Posterior vena cava (tissue), 2 donors: ENCODE measurements at regions of chr17 and their contacts with region 1.

Region 1: DNA sequence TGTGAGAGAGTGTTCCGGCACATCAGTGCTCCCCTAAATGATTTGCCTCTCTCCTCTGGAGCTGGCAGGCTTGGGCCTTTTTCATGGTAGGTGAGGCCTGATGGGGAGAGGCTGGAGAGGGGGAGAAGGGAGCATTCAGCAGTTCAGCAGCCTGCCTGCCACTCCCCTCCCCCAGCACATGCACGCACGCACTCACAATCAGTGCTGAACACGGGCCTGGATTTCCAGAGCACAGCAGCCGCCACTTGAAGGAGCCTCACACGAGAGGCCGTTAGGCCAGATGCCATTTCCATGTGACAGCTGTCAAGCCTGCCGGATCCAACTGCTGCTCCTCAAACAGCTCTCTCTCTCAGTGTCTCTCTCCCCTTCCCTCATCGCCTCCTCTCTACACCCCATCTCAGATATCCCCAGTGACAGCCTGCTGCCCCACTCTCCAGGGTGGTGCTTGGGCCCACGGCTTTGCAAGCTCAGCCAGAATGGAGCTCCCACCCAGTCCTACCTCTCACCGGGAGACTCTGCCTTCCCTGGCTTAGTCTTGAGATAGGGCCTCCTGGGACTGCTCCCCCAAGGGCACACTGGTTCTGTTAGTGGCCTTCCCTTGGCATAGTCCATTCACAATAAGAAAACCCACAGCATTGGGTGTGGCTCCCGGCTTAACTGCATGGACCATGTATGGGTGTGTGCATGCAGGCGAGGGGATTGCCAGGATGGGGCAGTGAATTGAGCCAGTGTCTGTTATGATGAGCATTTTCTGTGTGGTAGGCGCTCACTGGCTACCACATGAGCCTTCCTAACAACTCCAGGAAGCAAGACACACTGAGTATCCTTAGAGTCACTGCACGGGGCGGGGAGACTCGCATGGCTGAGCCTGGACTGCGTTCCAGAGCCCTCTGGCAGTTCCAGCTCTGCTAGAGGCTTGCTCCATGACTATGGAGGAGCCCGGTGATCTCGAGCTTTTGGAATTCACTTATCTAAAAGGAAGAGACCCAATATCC is 226.2 kb downstream of the CCDC182 start:
- DNase-seq: peak; percentile 52

Region 2: GRCh38 chr17:59038734-59039133 is 1519.8 kb after region 1 on chr17:
- intact Hi-C with region 1: loop called in 1 of 2 experiments (anchors 5 kb)
- DNase-seq: no peak